A673 (cell line): ENCODE measurements at regions of chr12 and their contacts with region 1.

Region 1: GRCh38 chr12:3041558-3042164 is 35.5 kb upstream of the TSPAN9 start:
- DNase-seq: peak; percentile 92
- H3K4me3 ChIP-seq: no peak overlapping the region
- H3K27ac ChIP-seq: no peak overlapping the region
- H3K4me1 ChIP-seq: no peaks in the 10 kb centered on the region
- H3K27me3 ChIP-seq: no peaks in the 10 kb centered on the region
- CTCF ChIP-seq: peak; percentile 73

Region 2: GRCh38 chr12:2752676-2753371 is 288.8 kb before region 1 on chr12:
- CTCF ChIA-PET with region 1: no interaction called
- POLR2A ChIA-PET with region 1: no interaction called
- intact Hi-C with region 1: no loop called
- DNase-seq: peak; percentile 81
- H3K4me3 ChIP-seq: no peak overlapping the region
- H3K27ac ChIP-seq: no peak overlapping the region
- H3K4me1 ChIP-seq: no peaks in the 10 kb centered on the region
- H3K27me3 ChIP-seq: peaks cover 56% of the 10 kb centered on the region
- CTCF ChIP-seq: no peak

Region 3: GRCh38 chr12:2853626-2854025 is 188.0 kb before region 1 on chr12:
- CTCF ChIA-PET with region 1: interaction called, 12 read pairs
- POLR2A ChIA-PET with region 1: no interaction called
- intact Hi-C with region 1: loop called (anchors 5 kb)
- DNase-seq: peak; percentile 91
- H3K4me3 ChIP-seq: no peak overlapping the region
- H3K27ac ChIP-seq: no peak overlapping the region
- H3K4me1 ChIP-seq: no peaks in the 10 kb centered on the region
- H3K27me3 ChIP-seq: no peaks in the 10 kb centered on the region
- CTCF ChIP-seq: peak; percentile 91

Region 4: DNA sequence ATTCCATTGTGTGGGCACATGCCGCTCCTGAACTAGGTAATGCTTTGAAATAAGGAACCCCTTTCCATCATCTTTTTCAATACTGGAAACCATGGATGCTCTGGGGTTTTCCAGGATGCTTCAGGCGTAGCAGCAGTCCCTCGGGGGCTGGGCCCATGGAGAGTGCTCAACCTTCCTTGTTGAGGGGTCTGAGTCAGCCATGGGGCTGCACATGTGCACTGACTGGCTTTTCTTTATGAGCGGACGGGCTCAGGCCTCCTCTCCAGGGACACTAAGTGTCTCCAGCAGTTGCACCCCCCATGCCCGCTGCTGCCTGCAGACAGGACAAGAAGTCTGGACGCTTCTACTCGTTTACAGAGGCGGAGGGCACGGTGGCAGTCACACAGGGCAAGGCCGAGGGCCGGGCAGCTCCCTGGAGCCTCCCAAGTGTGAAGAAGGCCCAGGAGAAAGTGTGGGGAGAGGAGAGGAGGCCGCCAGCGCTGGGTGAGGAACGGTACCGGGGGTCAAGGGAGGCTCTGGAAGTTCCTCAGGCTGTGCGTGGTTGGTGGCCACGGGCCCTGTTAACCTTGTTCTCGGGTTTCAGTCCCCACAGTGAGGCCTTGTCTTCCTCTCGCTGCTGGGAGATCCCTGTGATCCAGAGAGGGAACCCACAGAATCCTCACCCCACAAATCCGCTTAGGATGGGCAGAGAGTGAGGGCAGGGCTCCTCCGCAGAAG is 31.3 kb before region 1 on chr12:
- CTCF ChIA-PET with region 1: interaction called, 10 read pairs
- POLR2A ChIA-PET with region 1: no interaction called
- intact Hi-C with region 1: no loop called
- DNase-seq: no peak
- H3K4me3 ChIP-seq: no peak overlapping the region
- H3K27ac ChIP-seq: no peak overlapping the region
- H3K4me1 ChIP-seq: no peaks in the 10 kb centered on the region
- H3K27me3 ChIP-seq: no peaks in the 10 kb centered on the region
- CTCF ChIP-seq: no peak